Heart right ventricle (tissue), 16 donors: ENCODE measurements at regions of chr1 and their contacts with region 1.

Region 1: DNA sequence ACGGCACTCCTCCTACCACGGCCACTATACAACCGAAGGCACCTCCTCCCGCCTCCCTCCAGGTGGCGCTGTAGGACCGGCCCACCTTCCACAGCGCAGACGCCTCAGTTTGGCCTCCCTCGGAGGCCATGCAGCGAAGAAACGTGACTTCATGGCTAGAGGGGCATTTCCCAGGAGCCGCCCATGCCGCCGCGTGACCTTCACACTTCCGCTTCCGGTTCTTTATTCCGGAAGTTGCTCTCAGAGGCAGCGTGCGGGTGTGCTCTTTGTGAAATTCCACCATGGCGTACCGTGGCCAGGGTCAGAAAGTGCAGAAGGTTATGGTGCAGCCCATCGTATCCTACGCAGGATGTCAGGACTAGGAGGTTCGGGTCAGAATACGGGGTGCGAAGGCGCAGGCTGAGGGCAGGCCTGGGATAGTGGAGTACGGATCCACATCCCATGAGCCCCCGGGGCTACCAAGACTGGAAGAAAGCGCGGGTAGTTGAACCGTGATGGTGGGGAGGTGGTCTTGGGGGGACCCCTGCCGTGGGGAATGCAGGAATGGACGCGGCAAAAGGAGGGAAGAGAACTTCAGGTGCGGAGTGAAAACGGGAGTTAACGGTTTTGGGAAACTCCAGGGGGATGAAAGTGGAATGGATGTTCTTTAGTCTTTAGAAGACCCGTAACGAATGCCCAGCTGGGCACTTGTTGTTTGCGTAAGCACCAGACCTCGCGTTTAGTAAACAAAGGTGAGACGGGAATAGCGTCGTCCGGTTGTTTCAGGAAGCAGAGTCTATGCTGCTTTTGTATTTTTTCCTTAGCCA is at the start of gene SNRPE:
- DNase-seq: peak; percentile 94 to 96
- ATAC-seq: peak; percentile 98 to 99 (median 99)
- H3K4me3 ChIP-seq: peak within 1 kb of the TSS; percentile 43 to 90 (median 82)
- H3K27ac ChIP-seq: peak within 1 kb of the TSS in 9 of 10 donors; percentile 49 to 85 (median 70)
- H3K4me1 ChIP-seq: peaks cover 8 to 27% (median 16%) of the 10 kb centered on the region in 9 donors
- H3K27me3 ChIP-seq: no peaks in the 10 kb centered on the region
- CTCF ChIP-seq: peak; percentile 83 to 98 (median 97)
- total RNA-seq, gene SNRPE: 41.6 to 70.6 (median 50.4) TPM

Region 2: DNA sequence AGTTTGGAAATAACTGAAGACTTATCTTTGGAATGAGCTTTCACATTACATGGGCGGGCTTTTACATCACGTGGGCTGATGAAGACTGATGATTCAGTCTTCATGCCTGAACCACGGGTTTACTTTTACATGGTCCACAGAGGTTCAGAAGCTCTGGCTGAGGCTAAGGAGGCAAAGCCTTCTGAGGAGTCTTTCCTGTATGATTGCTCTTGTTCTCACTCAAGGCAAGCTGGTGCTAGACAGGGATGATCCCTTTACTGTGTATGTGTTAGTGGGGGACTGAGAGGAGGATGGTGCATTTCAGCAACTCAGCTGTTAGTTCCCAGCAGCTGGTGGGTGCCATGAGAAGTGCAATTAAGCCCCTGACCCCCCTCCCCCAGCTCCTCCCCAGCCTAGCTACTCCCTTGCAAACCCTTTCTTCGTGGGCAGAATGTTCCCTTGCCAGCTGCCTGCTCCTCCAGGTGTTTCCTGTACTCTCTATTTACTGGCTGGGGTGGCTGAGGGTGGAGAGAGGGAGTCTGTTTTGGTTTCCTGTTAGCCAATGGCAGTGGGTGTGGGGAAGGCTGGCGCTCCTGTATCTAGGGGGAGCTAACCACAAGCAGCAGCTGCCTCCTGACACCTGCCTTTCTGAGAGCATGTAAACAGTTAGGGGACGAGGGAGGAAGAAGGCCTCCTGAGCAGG is 540.9 kb before region 1 on chr1:
- intact Hi-C with region 1: no loop called
- DNase-seq: peak in 1 of 2 donors; percentile 49
- ATAC-seq: peak in 5 of 8 donors; percentile 17 to 40 (median 23)
- H3K4me3 ChIP-seq: no peak overlapping the region
- H3K27ac ChIP-seq: peak overlapping the region in 9 of 10 donors; percentile 1 to 98 (median 91)
- H3K4me1 ChIP-seq: peaks cover 27 to 74% (median 61%) of the 10 kb centered on the region in 9 donors
- H3K27me3 ChIP-seq: no peaks in the 10 kb centered on the region
- CTCF ChIP-seq: no peak

Region 3: DNA sequence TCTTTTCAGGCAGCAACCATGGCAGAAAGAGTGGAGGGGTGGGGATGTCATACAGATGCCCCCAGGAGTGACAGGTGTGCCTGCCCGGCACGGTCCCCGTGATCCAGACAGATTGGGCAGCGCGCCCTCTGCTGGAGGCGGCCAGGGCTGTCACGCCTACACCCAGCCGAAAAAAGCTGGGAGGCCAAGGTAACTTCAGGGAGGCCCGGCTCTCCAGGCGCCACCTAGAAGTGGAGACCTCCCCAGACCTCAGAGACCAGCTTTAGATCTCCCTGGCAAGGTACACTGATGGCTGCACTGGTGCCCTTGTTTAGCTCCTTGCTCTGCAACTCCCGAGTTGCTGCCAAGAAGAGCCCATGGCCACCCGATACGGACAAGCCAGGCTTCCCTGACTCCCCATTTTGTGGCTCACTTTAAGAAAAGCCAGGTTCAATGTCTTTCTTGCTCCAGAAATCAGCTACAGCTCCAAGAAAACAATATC is 345.6 kb after region 1 on chr1:
- intact Hi-C with region 1: loop called in 5 of 10 experiments (anchors 1 to 10 kb)
- DNase-seq: peak; percentile 53 to 75
- ATAC-seq: peak; percentile 69 to 94 (median 87)
- H3K4me3 ChIP-seq: no peak overlapping the region
- H3K27ac ChIP-seq: no peak overlapping the region
- H3K4me1 ChIP-seq: no peaks in the 10 kb centered on the region
- H3K27me3 ChIP-seq: peaks cover 0 to 32% (median 24%) of the 10 kb centered on the region in 7 donors
- CTCF ChIP-seq: peak; percentile 63 to 93 (median 91)